B cell (primary cell): ENCODE measurements at regions of chr1 and their contacts with region 1.

Region 1: DNA sequence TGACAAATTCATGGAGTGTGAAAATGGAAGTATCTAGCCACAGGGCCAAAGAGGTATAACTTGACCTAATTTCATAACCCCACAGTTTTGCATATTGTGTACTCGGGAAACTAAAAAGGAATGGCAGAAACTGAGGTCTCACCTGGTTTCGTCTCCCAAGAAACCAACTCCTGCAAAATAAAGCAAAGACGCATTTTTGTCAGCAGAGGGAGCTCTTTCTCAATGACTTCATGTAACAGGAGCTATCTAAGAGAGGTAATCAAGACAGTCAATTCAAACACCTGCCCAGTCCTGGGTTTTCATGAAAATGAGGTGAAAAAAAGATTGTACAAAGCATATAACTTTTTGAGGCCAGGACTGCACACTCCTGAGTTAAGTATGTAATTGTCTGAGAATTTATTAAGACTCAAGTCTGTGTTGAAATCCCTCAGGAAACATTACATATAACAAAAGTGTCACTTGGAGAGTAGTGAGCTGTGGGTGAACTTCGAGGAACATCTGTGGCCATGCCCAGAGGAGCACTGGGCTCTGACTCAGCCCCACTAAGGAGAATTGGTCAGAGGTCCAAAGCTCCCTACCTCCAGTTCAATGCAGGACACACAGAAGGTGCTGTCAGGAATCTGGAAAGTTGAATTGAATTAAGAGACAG is 17.6 kb downstream of the FCRL4 start:
- DNase-seq: peak; percentile 83
- ATAC-seq: peak; percentile 44
- H3K4me3 ChIP-seq: no peak overlapping the region
- H3K4me3 Mint-ChIP-seq: no peak overlapping the region
- H3K27ac ChIP-seq: no peak overlapping the region
- H3K27ac Mint-ChIP-seq: no peak overlapping the region
- H3K4me1 ChIP-seq: peaks cover 61 to 62% of the 10 kb centered on the region in 2 donors
- H3K4me1 Mint-ChIP-seq: peaks cover 70% of the 10 kb centered on the region
- H3K27me3 ChIP-seq: no peaks in the 10 kb centered on the region
- H3K27me3 Mint-ChIP-seq: no peaks in the 10 kb centered on the region
- CTCF ChIP-seq: peak; percentile 94

Region 2: DNA sequence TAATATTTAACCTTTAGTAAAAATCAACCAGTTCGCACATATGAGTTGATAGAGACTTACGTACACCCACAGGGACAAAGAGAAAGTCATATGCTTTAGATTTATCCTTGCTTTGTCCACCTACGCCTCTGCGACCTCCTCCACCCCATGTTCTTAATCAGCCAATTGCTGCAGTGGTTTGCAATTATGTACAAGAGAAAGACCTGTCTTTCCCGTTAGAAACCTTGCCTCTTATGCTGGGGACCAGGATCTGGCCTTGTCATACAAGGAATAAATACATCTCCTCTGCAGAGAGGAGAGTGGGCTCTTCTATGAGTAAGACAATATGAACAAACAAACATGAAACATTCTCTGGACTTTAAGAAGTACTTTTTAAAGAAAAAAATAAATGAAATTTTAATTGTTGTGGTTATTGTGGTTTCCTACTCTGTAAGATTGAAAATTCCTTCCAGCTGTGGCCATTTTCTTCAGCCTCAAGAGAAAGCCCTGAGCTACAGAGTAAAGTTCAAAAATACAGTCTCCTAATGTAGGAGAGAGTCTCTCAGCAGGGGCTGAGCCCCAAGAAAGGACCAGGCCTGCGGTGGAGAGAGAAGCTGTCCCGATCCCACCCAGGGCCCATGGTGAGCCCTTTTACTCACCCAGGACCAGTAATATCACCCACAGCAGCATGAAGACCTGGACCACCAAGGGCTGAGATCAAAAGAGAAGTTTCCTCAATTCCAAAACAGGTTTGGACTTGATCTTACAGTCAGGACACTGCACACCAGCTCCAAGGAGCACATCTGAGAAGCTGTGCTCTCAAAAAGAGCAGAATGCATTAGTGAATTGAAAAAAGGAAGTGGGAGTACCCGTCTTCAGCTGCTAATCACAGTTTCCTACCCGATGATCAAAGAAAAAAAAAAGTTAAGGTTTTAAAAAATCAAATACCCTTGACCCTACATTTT is 28.3 kb before region 1 on chr1 and contains the start of gene FCRL5:
- CTCF ChIA-PET with region 1: interaction called, 17 read pairs
- POLR2A ChIA-PET with region 1: no interaction called
- intact Hi-C with region 1: no loop called
- DNase-seq: peak; percentile 69
- ATAC-seq: peak; percentile 82
- H3K4me3 ChIP-seq: peak within 1 kb of the TSS; percentile 49 to 85 (median 71)
- H3K4me3 Mint-ChIP-seq: peak within 1 kb of the TSS; percentile 91
- H3K27ac ChIP-seq: peak within 1 kb of the TSS; percentile 42 to 78
- H3K27ac Mint-ChIP-seq: peak within 1 kb of the TSS; percentile 89
- H3K4me1 ChIP-seq: peaks cover 27 to 29% of the 10 kb centered on the region in 2 donors
- H3K4me1 Mint-ChIP-seq: peaks cover 63% of the 10 kb centered on the region
- H3K27me3 ChIP-seq: no peaks in the 10 kb centered on the region
- H3K27me3 Mint-ChIP-seq: no peaks in the 10 kb centered on the region
- CTCF ChIP-seq: no peak
- total RNA-seq, gene FCRL5: 34.0 and 35.0 TPM in 2 replicates

Region 3: DNA sequence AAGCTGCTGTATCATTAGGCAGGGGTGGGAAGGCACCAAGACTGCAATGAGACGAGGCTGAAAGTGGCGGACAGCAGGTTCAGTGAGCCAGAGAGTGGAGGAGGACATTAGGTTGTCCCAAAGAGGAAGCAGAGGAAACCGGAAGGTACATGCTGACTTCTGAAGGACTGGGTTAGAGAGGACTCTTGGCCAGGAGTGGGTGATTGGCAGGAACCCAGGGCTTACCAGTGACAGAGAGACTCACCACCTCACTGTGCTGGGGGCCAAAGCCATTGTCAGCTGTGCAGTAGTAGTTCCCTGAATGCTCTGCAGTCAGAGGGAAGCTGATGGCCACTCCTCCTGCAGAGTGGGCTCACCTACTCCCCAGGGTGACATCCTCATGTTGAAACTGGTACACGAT is 59.5 kb after region 1 on chr1:
- CTCF ChIA-PET with region 1: interaction called, 10 read pairs
- POLR2A ChIA-PET with region 1: no interaction called
- intact Hi-C with region 1: no loop called
- DNase-seq: no peak
- ATAC-seq: no peak
- H3K4me3 ChIP-seq: no peak overlapping the region
- H3K4me3 Mint-ChIP-seq: no peak overlapping the region
- H3K27ac ChIP-seq: no peak overlapping the region
- H3K27ac Mint-ChIP-seq: no peak overlapping the region
- H3K4me1 ChIP-seq: no peaks in the 10 kb centered on the region
- H3K4me1 Mint-ChIP-seq: peaks cover 5% of the 10 kb centered on the region
- H3K27me3 ChIP-seq: no peaks in the 10 kb centered on the region
- H3K27me3 Mint-ChIP-seq: no peaks in the 10 kb centered on the region
- CTCF ChIP-seq: no peak

Region 4: GRCh38 chr1:157725221-157725577 is 144.9 kb after region 1 on chr1:
- CTCF ChIA-PET with region 1: interaction called, 16 read pairs
- POLR2A ChIA-PET with region 1: no interaction called
- intact Hi-C with region 1: no loop called
- DNase-seq: peak; percentile 86
- ATAC-seq: peak; percentile 21
- H3K4me3 ChIP-seq: peak overlapping the region in 1 of 5 experiments; percentile 45
- H3K4me3 Mint-ChIP-seq: peak overlapping the region; percentile 71
- H3K27ac ChIP-seq: peak overlapping the region; percentile 80 to 94
- H3K27ac Mint-ChIP-seq: peak overlapping the region; percentile 98
- H3K4me1 ChIP-seq: peaks cover 65 to 69% of the 10 kb centered on the region in 2 donors
- H3K4me1 Mint-ChIP-seq: peaks cover 74% of the 10 kb centered on the region
- H3K27me3 ChIP-seq: no peaks in the 10 kb centered on the region
- H3K27me3 Mint-ChIP-seq: no peaks in the 10 kb centered on the region
- CTCF ChIP-seq: no peak

Region 5: GRCh38 chr1:157781048-157781447 is 200.7 kb after region 1 on chr1:
- CTCF ChIA-PET with region 1: interaction called, 18 read pairs
- POLR2A ChIA-PET with region 1: interaction called, 4 read pairs
- intact Hi-C with region 1: no loop called
- DNase-seq: peak; percentile 45
- ATAC-seq: peak; percentile 6
- H3K4me3 ChIP-seq: peak overlapping the region in 1 of 5 experiments; percentile 17
- H3K4me3 Mint-ChIP-seq: peak overlapping the region; percentile 64
- H3K27ac ChIP-seq: peak overlapping the region; percentile 31 to 53
- H3K27ac Mint-ChIP-seq: peak overlapping the region; percentile 93
- H3K4me1 ChIP-seq: peaks cover 83 to 90% of the 10 kb centered on the region in 2 donors
- H3K4me1 Mint-ChIP-seq: peaks cover 87% of the 10 kb centered on the region
- H3K27me3 ChIP-seq: no peaks in the 10 kb centered on the region
- H3K27me3 Mint-ChIP-seq: no peaks in the 10 kb centered on the region
- CTCF ChIP-seq: no peak

Region 6: GRCh38 chr1:157862114-157863070 is 282.1 kb after region 1 on chr1:
- CTCF ChIA-PET with region 1: interaction called, 110 read pairs
- POLR2A ChIA-PET with region 1: no interaction called
- intact Hi-C with region 1: loop called (anchors 1 kb)
- DNase-seq: peak; percentile 34
- ATAC-seq: peak; percentile 24
- H3K4me3 ChIP-seq: no peak overlapping the region
- H3K4me3 Mint-ChIP-seq: no peak overlapping the region
- H3K27ac ChIP-seq: no peak overlapping the region
- H3K27ac Mint-ChIP-seq: peak overlapping the region; percentile 32
- H3K4me1 ChIP-seq: peaks cover 6 to 7% of the 10 kb centered on the region in 2 donors
- H3K4me1 Mint-ChIP-seq: peaks cover 19% of the 10 kb centered on the region
- H3K27me3 ChIP-seq: no peaks in the 10 kb centered on the region
- H3K27me3 Mint-ChIP-seq: no peaks in the 10 kb centered on the region
- CTCF ChIP-seq: no peak

Region 7: GRCh38 chr1:158087320-158087927 is 507.1 kb after region 1 on chr1:
- CTCF ChIA-PET with region 1: no interaction called
- POLR2A ChIA-PET with region 1: no interaction called
- intact Hi-C with region 1: no loop called
- DNase-seq: peak; percentile 63
- ATAC-seq: peak; percentile 87
- H3K4me3 ChIP-seq: no peak overlapping the region
- H3K4me3 Mint-ChIP-seq: no peak overlapping the region
- H3K27ac ChIP-seq: no peak overlapping the region
- H3K27ac Mint-ChIP-seq: no peak overlapping the region
- H3K4me1 ChIP-seq: no peaks in the 10 kb centered on the region
- H3K4me1 Mint-ChIP-seq: no peaks in the 10 kb centered on the region
- H3K27me3 ChIP-seq: no peaks in the 10 kb centered on the region
- H3K27me3 Mint-ChIP-seq: peaks cover 19% of the 10 kb centered on the region
- CTCF ChIP-seq: peak; percentile 80